ENCODE measurements at regions of chr10 and their contacts with region 1.

Region 1: GRCh38 chr10:58177362-58177947 is 90.2 kb downstream of the IPMK start:
- DNase-seq: no peak
- H3K4me3 ChIP-seq: no peak overlapping the region
- CTCF ChIP-seq: peak; percentile 22

Region 2: GRCh38 chr10:58201704-58202103 is 24.2 kb after region 1 on chr10:
- CTCF ChIA-PET with region 1: interaction called, 20 read pairs
- POLR2A ChIA-PET with region 1: no interaction called
- DNase-seq: no peak
- H3K4me3 ChIP-seq: no peak overlapping the region
- CTCF ChIP-seq: no peak

Region 3: DNA sequence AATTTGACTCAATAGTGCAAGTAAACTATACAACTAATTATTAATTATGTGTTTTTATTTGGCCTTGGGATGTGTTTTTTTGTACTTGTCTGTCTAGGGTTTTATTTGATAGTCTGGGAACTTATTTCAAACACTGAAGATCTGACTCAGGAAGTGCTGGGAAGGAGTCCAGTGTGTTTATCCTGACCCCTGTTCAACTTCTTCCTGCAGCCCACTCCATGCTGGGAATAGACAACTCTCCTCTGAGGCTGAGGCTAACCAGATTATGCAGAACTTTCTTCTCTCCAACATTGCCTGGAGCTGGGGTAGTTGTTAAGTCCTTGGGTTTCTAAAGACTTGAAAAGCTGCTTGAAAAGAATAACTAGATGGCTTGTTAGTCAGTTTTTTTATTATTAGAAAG is 98.5 kb after region 1 on chr10:
- CTCF ChIA-PET with region 1: interaction called, 12 read pairs
- POLR2A ChIA-PET with region 1: no interaction called
- DNase-seq: no peak
- H3K4me3 ChIP-seq: no peak overlapping the region
- CTCF ChIP-seq: no peak

Region 4: DNA sequence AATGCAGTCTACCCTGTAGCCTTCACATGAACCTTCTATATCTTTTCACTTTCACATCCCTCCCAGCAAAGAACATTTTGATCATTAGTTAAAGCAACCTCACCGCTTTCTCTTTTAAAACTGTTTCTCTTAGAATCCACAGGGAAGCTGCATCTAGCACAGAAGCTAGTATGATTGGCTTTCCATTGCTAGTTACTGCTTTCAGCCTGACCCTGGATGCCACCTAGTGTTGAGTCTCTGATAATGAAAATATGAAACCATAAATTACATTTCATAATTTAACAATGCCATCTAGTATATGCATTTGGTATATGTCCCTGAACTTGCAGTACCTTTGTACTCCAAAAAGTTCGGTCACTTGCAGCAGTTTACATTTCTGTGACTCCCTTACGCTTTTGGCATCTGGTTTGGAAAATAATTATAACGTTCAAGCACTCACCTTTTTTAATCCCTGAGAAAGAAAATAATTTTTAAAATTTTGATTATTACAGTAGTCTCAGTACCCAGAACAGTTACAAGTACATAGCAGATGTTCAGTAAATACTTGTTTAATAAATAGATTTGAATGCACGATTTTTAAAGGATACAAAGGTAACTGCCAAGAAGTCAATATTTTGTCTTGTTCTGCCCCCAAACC is 114.2 kb after region 1 on chr10:
- CTCF ChIA-PET with region 1: interaction called, 328 read pairs
- POLR2A ChIA-PET with region 1: no interaction called
- DNase-seq: no peak
- H3K4me3 ChIP-seq: no peak overlapping the region
- CTCF ChIP-seq: peak; percentile 63

Region 5: GRCh38 chr10:58305821-58306220 is 128.4 kb after region 1 on chr10:
- CTCF ChIA-PET with region 1: interaction called, 54 read pairs
- POLR2A ChIA-PET with region 1: no interaction called
- DNase-seq: no peak
- H3K4me3 ChIP-seq: no peak overlapping the region
- CTCF ChIP-seq: no peak

Measured in AG04449 (cell line).